GM18951 (cell line): ENCODE measurements at regions of chr4 and their contacts with region 1.

Region 1: GRCh38 chr4:69910016-69910782 is 20.7 kb upstream of the CSN1S1 start:
- POLR2A ChIP-seq: no peak

Region 2: GRCh38 chr4:70158576-70158975 is 248.4 kb after region 1 on chr4:
- in situ Hi-C with region 1: loop called (anchors 25 kb)
- POLR2A ChIP-seq: no peak